Activated T-helper 2 cell treated with anti-CD3 and anti-CD28 coated beads, Interferon-gamma antibody, Interleukin-2, Interleukin-4, amounts not matched to agents 10 μg/mL and 5 μg/mL and 100 μg/mL, durations not matched to agents 14 hours and 24 hours and 36 hours (primary cell): ENCODE measurements at regions of chr5 and their contacts with region 1.

Region 1: DNA sequence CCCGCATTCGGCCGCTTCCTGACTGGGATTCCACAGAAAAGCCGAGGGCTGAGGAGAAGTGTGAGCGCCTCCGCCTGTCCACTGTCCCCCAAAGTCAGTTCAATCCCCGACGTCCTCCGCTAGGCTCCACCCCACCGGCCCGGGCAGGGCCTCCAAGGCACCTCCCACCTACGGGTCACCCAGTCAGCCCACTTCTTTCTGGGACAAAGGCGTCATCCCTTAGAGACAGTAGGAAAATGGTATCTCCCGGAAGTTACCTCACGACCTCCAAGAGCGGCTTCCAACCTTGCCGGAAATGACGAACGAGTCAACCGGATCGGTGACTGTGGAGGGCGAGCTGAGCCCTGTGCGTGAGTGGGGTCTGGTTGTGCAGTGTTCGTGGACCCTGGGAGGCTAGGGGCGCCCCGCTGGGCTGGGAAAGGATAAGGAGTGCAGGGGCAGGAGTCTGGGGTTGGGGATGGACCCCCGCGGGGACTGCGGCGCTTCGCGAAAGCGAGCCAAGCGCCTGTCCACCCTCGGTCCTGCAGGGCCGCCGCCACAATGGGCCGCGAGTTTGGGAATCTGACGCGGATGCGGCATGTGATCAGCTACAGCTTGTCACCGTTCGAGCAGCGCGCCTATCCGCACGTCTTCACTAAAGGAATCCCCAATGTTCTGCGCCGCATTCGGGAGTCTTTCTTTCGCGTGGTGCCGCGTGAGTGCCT is at the starts of genes GDF9 and UQCRQ:
- DNase-seq: peak; percentile 92
- H3K4me3 Mint-ChIP-seq: peak within 1 kb of the TSS; percentile 100
- H3K27ac Mint-ChIP-seq: peak within 1 kb of the TSS; percentile 100
- H3K4me1 Mint-ChIP-seq: peaks cover 22% of the 10 kb centered on the region
- H3K27me3 Mint-ChIP-seq: peaks cover 6% of the 10 kb centered on the region
- total RNA-seq, gene GDF9: 0.11 TPM in 1 of 2 replicates, not detected in the other
- total RNA-seq, gene UQCRQ: 400 and 412 TPM in 2 replicates

Region 2: GRCh38 chr5:132495667-132496190 is 370.8 kb before region 1 on chr5:
- intact Hi-C with region 1: loop called (anchors 1 kb)
- DNase-seq: peak; percentile 74
- H3K4me3 Mint-ChIP-seq: peak overlapping the region; percentile 88
- H3K27ac Mint-ChIP-seq: peak overlapping the region; percentile 91
- H3K4me1 Mint-ChIP-seq: peaks cover 56% of the 10 kb centered on the region
- H3K27me3 Mint-ChIP-seq: no peaks in the 10 kb centered on the region

Region 3: DNA sequence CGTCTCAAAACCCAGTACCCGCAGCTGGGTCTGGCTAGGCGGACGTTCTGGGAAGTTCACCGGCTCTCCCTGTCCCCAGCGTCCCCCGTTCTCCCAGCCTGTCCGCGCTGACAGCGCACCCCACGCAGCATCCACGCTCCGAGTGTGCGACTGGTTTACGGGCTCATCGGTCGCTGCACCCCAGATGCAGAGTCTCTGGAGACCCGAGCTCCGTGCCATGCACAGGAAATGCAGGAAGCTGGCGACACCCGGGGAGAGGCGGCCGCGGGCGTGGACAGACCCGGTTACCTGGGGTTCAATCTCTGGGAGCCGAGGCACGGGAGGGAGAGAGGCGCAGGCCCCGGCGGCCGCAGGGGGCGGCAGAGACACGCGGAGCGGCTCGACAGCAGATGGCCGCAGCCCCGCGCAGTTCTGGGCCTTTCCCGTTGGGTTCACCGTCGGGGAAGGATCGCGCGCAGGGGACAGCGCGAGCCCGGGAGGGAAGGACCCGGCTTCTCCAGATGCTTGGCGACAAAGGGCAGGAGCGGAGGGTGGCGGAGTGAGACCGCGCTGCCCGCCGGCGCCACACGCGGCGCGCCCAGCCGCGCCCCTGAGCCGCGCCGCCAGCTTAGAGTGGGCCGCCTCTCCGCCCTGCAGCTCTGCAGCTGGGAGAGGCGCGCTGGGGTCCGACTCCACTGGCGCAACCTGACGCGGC is 36.6 kb before region 1 on chr5:
- intact Hi-C with region 1: loop called (anchors 2 kb)
- DNase-seq: peak; percentile 67
- H3K4me3 Mint-ChIP-seq: peak overlapping the region; percentile 87
- H3K27ac Mint-ChIP-seq: peak overlapping the region; percentile 66
- H3K4me1 Mint-ChIP-seq: peaks cover 12% of the 10 kb centered on the region
- H3K27me3 Mint-ChIP-seq: peaks cover 63% of the 10 kb centered on the region

Region 4: DNA sequence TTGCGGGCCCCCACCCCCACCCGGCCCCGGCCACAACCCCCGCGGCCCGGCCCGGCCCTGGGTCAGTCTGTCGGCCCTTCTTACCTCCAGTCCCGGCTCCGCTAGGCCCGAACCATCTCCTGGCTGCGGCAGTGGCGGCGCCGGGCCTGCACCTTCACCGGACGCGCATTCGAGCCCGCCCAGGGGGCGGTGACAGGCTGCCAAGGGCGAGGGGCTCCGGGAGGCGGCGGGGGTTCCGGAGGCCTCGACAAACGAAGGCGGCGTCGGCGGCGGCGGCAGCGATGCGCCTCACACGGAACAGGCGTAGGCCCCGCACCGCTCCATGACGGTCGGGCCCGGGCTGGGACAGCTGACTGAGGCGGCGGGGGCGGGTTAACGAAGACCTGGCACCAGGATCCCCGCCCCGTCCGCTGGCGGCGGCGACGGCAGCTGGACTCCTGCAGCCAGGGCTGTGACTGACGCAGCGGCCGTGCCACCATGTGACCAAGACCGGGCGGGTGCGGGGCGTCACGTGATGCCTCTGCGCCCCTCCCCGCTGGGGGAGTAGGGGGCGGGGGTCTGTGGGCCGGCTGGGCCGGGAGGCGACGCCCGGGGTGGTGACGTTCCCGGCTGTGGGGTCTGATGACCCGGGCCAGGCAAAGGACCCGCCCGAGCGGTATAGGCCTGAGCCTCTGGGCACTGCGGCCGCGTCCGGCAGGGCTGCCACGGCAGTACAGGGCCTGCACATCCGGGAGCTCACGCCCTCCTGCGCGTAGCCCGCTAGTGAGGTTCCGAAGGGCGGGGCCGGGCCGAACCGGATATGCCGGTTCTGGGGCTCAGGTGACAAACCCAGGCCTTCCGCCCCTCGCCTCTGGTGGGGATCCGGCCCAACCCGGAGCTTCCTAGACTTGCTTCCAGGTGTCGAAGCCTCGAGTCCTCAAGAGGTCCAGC is 96.9 kb after region 1 on chr5 and contains the start of gene AFF4:
- intact Hi-C with region 1: loop called (anchors 1 kb)
- DNase-seq: peak; percentile 83
- H3K4me3 Mint-ChIP-seq: peak within 1 kb of the TSS; percentile 93
- H3K27ac Mint-ChIP-seq: peak within 1 kb of the TSS; percentile 95
- H3K4me1 Mint-ChIP-seq: peaks cover 17% of the 10 kb centered on the region
- H3K27me3 Mint-ChIP-seq: no peaks in the 10 kb centered on the region
- total RNA-seq, gene AFF4: 33.1 and 35.1 TPM in 2 replicates

Region 5: GRCh38 chr5:133051580-133052332 is 185.3 kb after region 1 on chr5 and contains the start of gene HSPA4:
- intact Hi-C with region 1: loop called (anchors 1 kb)
- DNase-seq: peak; percentile 97
- H3K4me3 Mint-ChIP-seq: peak within 1 kb of the TSS; percentile 84
- H3K27ac Mint-ChIP-seq: peak within 1 kb of the TSS; percentile 99
- H3K4me1 Mint-ChIP-seq: peaks cover 30% of the 10 kb centered on the region
- H3K27me3 Mint-ChIP-seq: no peaks in the 10 kb centered on the region
- total RNA-seq, gene HSPA4: 223 and 229 TPM in 2 replicates